A549 (cell line): ENCODE measurements at regions of chr12 and their contacts with region 1.

Region 1: DNA sequence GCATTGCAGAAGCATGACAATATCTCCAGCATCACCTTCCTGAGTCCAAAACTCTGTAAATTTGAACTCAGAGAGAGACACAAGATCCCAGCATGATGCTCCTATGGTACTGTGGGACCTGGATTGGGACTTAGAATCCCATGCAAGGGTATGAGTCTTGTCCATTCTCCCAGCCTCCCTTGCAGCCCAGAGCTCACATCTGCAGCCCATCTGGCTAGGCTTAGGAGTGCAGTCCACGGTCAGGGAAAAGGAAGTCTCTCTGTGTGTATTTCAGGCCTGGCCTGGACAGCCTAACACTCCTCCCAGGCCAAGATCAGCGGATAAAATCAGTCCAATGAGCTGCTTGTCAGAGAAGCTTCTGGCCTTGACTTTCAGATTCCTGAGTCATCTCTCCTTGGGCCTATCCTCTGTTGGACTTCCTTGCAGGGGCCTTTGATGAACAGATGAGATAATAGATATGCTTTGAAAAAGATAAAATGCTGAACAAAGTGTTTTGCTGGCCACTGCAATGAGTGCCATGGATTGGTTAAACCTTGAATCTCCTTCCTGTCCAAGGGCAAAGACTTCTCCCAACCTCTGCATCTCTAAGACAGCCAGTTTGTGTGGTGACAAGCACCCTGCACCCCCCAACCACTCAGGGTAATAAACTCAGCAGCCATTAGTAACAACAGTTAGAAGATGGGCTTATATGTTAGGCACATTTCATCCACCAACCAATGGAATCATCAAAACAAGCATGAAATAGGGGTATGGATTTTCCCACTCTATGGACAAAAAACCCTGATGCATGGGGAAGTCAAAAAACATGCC is 412.8 kb upstream of the TBX3 start:
- DNase-seq: no peak
- ATAC-seq: no peak; a peak in 1 of 6 replicates
- H3K4me3 ChIP-seq: no peak overlapping the region
- H3K27ac ChIP-seq: no peak overlapping the region
- H3K4me1 ChIP-seq: no peaks in the 10 kb centered on the region
- CTCF ChIP-seq: no peak
- EP300 ChIP-seq: no peak
- POLR2A ChIP-seq: no peak
- RAD21 ChIP-seq: no peak

Region 2: GRCh38 chr12:115194448-115194847 is 97.7 kb after region 1 on chr12:
- CTCF ChIA-PET with region 1: no interaction called
- POLR2A ChIA-PET with region 1: interaction called, 10 read pairs
- DNase-seq: no peak
- ATAC-seq: no peak
- H3K4me3 ChIP-seq: no peak overlapping the region
- H3K27ac ChIP-seq: no peak overlapping the region
- H3K4me1 ChIP-seq: no peaks in the 10 kb centered on the region
- CTCF ChIP-seq: no peak
- EP300 ChIP-seq: no peak
- POLR2A ChIP-seq: no peak
- RAD21 ChIP-seq: no peak